Natural killer cell (primary cell): ENCODE measurements at regions of chrX and their contacts with region 1.

Region 1: GRCh38 chrX:47619486-47620302 is at the start of gene SYN1:
- DNase-seq: peak; percentile 79 to 93
- ATAC-seq: peak; percentile 94 to 97 (median 97)
- H3K4me3 ChIP-seq: no peak within 1 kb of the TSS
- H3K4me3 Mint-ChIP-seq: peak within 1 kb of the TSS; percentile 17
- H3K27ac ChIP-seq: no peak within 1 kb of the TSS
- H3K27ac Mint-ChIP-seq: no peak within 1 kb of the TSS
- H3K4me1 ChIP-seq: peaks cover 15% of the 10 kb centered on the region
- H3K4me1 Mint-ChIP-seq: peaks cover 0 to 6% of the 10 kb centered on the region in 2 donors
- H3K27me3 ChIP-seq: peaks cover 19% of the 10 kb centered on the region
- H3K27me3 Mint-ChIP-seq: peaks cover 55 to 58% of the 10 kb centered on the region in 2 donors
- CTCF ChIP-seq: no peak
- total RNA-seq, gene SYN1: 0.40 TPM in 1 of 3 donors, not detected in the others

Region 2: DNA sequence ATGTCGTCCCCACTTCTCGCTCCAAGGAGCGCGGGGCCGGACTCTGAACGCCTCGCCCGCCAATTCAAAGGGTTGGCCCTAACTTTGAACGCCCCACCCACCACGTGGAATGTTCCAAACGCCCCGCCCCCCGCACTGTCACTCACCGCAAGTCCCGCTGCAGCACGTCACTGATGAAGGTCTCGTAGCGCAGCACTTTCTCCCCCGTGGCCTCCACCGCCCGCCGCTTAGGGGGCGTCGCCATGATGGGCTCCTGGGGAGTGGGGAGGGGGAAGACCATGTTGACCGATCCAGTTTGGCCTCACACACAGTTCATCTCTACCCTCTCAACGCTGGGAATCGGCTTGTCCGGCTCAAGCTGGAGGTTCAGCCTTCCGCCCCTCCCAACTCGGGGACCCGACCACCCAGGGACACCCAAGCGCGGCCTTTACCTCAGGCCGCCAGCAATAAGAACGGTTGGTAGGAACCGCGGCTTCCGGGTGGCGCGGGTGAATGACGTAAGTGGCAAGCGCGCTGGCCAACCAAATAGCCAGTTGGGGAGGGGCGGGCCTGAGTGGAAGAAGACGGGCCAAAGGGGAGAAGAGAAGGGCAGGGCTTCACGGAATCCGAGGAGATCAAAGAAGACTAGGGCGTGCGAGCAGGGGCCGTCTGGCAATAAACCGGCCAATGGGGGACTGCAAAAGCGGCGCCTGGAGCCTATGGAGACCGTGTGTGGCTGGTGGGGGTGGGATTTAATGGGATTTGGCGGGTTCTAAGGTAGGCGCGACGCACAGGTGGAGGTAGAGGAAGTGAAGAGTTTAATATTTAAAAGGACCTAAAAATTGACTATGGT is 39.2 kb after region 1 on chrX and contains the start of gene UXT:
- intact Hi-C with region 1: loop called (anchors 5 kb)
- DNase-seq: peak; percentile 85 to 94
- ATAC-seq: peak; percentile 81 to 92 (median 82)
- H3K4me3 ChIP-seq: peak within 1 kb of the TSS; percentile 89
- H3K4me3 Mint-ChIP-seq: peak within 1 kb of the TSS; percentile 83
- H3K27ac ChIP-seq: peak within 1 kb of the TSS; percentile 99
- H3K27ac Mint-ChIP-seq: peak within 1 kb of the TSS; percentile 93
- H3K4me1 ChIP-seq: peaks cover 8% of the 10 kb centered on the region
- H3K4me1 Mint-ChIP-seq: peaks cover 0 to 8% of the 10 kb centered on the region in 2 donors
- H3K27me3 ChIP-seq: no peaks in the 10 kb centered on the region
- H3K27me3 Mint-ChIP-seq: peaks cover 0 to 5% of the 10 kb centered on the region in 2 donors
- CTCF ChIP-seq: no peak
- total RNA-seq, gene UXT: 88.2 to 102 (median 95.4) TPM

Region 3: DNA sequence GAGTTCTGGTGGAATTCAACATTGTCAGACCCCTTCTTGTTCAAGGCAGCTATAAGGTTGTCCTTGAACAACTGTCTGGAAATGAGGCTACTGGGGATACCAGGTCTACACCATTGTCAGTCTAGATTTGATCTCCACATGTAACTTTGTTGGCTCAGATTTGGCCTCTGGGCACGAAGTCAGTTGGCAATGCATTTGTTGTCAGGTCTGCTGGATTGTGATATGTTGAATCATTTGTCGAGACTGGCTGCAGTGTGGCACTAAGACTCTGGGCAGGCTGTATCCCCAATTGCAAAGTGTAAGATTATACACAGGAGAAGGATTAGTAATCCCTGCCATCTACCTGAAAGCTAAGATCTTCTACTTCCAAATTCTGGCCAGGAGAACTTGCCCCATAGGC is 243.5 kb after region 1 on chrX:
- intact Hi-C with region 1: no loop called
- DNase-seq: no peak
- ATAC-seq: no peak
- H3K4me3 ChIP-seq: no peak overlapping the region
- H3K4me3 Mint-ChIP-seq: no peak overlapping the region
- H3K27ac ChIP-seq: no peak overlapping the region
- H3K27ac Mint-ChIP-seq: no peak overlapping the region
- H3K4me1 ChIP-seq: no peaks in the 10 kb centered on the region
- H3K4me1 Mint-ChIP-seq: no peaks in the 10 kb centered on the region
- H3K27me3 ChIP-seq: no peaks in the 10 kb centered on the region
- H3K27me3 Mint-ChIP-seq: no peaks in the 10 kb centered on the region
- CTCF ChIP-seq: no peak